Colonic mucosa (tissue), 4 donors: ENCODE measurements at regions of chr9 and their contacts with region 1.

Region 1: DNA sequence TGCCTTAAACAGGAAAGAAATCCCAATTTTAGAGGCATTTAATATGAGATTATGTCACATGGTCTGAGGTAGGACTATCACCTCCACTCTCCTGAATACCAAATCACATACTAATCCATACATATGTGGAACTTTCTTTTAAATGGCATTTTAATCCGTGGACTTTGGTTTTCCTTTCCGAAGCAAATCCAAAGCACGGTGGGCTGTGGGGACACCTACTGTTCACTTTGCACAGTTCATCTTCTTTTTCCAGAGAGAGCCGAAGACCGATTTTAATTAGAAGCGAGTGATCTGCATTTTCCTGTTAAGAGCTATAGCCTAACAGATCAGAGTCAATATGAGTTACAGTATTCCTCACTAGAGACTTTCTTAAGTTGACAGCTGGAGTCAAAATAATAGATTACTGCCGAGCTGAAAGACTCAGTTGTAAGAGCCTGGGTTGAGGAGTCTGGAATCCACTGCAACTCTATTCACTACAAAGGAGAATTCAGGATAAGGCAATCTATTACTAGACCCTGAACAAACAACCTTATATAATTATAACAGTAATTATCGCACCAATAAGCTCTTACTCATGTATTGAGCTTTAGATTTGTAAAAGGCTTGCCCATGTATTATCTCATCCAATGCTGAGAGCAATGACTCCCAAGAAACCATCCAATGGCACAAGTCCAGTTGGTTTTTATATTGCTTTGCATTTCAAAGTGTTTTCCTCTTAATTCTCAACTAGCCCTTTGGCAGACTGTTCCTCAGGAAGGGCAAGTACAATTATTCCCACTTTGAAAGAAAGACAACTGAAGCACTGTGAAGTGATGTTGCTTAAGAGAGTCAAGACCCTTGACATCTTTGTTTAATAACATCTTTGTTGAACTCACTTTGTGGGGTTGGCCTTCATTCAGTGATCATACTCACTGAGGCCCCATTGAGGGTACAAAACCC is 144.7 kb downstream of the TRPM6 start:
- DNase-seq: no peak
- H3K4me3 ChIP-seq: no peak overlapping the region
- H3K27ac ChIP-seq: no peak overlapping the region
- H3K4me1 ChIP-seq: no peaks in the 10 kb centered on the region
- H3K27me3 ChIP-seq: peaks cover 4% of the 10 kb centered on the region
- CTCF ChIP-seq: peak; percentile 58

Region 2: GRCh38 chr9:74577956-74578355 is 165.1 kb before region 1 on chr9:
- intact Hi-C with region 1: loop called (anchors 5 kb)
- DNase-seq: no peak
- H3K4me3 ChIP-seq: no peak overlapping the region
- H3K27ac ChIP-seq: no peak overlapping the region
- H3K4me1 ChIP-seq: no peaks in the 10 kb centered on the region
- H3K27me3 ChIP-seq: no peaks in the 10 kb centered on the region
- CTCF ChIP-seq: no peak

Region 3: DNA sequence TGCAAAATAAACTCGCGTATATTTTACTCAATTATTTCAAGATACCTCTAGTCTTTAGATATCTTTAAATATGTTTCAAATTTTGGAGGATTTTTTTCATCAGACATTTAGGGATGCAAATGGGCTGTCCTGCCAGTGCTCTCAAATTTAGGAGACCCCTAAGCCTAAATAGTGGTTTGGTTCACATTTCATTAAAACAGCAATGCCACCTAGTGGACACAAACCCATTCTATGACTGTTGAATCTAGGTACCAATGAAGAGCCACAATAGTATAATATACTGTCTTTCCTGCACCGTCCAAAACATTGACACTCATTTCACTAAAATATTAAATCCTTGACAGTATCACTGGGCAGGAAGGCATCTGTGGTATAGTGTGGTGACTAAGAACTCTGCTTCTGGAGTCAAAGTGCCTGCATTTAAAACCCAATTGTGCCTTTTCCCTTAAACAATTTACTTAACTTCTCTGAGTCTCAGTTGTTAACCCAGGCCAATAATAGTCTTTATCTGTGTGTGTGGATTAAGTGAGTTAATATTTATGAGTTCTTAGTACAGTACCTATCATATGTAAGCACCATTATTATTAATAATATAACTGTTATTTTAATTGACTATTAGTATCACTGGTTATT is 97.9 kb before region 1 on chr9:
- intact Hi-C with region 1: no loop called
- DNase-seq: no peak
- H3K4me3 ChIP-seq: no peak overlapping the region
- H3K27ac ChIP-seq: no peak overlapping the region
- H3K4me1 ChIP-seq: no peaks in the 10 kb centered on the region
- H3K27me3 ChIP-seq: no peaks in the 10 kb centered on the region
- CTCF ChIP-seq: no peak

Region 4: GRCh38 chr9:74795803-74796202 is 52.7 kb after region 1 on chr9:
- intact Hi-C with region 1: no loop called
- DNase-seq: no peak
- H3K4me3 ChIP-seq: no peak overlapping the region
- H3K27ac ChIP-seq: no peak overlapping the region
- H3K4me1 ChIP-seq: no peaks in the 10 kb centered on the region
- H3K27me3 ChIP-seq: no peaks in the 10 kb centered on the region
- CTCF ChIP-seq: no peak

Region 5: GRCh38 chr9:74810200-74810599 is 67.1 kb after region 1 on chr9:
- intact Hi-C with region 1: no loop called
- DNase-seq: no peak
- H3K4me3 ChIP-seq: no peak overlapping the region
- H3K27ac ChIP-seq: no peak overlapping the region
- H3K4me1 ChIP-seq: no peaks in the 10 kb centered on the region
- H3K27me3 ChIP-seq: no peaks in the 10 kb centered on the region
- CTCF ChIP-seq: no peak

Region 6: DNA sequence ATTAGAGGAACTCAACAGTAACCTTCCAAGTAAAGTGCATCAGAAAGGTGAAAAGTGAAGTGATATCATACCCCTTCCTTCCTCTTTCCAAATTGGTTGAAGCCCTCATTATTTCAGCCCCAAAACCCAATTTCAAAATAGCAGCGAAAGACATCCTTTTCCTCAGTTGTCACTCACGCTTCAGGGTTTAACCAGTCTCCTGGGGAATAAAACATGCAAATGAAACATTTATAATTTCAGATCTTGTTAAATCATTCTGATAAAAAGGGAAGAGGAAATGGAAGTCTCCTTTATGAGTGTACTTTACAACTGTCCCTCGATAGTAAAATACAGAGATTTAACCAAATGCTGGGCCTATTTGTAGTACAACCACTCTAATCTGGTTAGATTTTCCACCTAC is 122.1 kb after region 1 on chr9:
- intact Hi-C with region 1: no loop called
- DNase-seq: no peak
- H3K4me3 ChIP-seq: no peak overlapping the region
- H3K27ac ChIP-seq: peak overlapping the region; percentile 30
- H3K4me1 ChIP-seq: no peaks in the 10 kb centered on the region
- H3K27me3 ChIP-seq: no peaks in the 10 kb centered on the region
- CTCF ChIP-seq: no peak